CD8-positive, alpha-beta T cell (primary cell): ENCODE measurements at regions of chr6 and their contacts with region 1.

Region 1: GRCh38 chr6:79646006-79646405 is 14.9 kb downstream of the SH3BGRL2 start:
- DNase-seq: peak in 6 of 9 experiments; percentile 12 to 73 (median 47)
- ATAC-seq: peak; percentile 42
- H3K4me3 ChIP-seq: no peak overlapping the region
- H3K4me3 Mint-ChIP-seq: no peak overlapping the region
- H3K27ac ChIP-seq: no peak overlapping the region
- H3K27ac Mint-ChIP-seq: no peak overlapping the region
- H3K4me1 ChIP-seq: peaks cover 14% of the 10 kb centered on the region
- H3K4me1 Mint-ChIP-seq: peaks cover 10% of the 10 kb centered on the region
- H3K27me3 ChIP-seq: no peaks in the 10 kb centered on the region
- H3K27me3 Mint-ChIP-seq: peaks cover 9% of the 10 kb centered on the region
- CTCF ChIP-seq: peak; percentile 27

Region 2: GRCh38 chr6:79600812-79601609 is 45.0 kb before region 1 on chr6:
- CTCF ChIA-PET with region 1: no interaction called
- POLR2A ChIA-PET with region 1: no interaction called
- intact Hi-C with region 1: no loop called
- DNase-seq: no peak
- ATAC-seq: no peak
- H3K4me3 ChIP-seq: no peak overlapping the region
- H3K4me3 Mint-ChIP-seq: no peak overlapping the region
- H3K27ac ChIP-seq: no peak overlapping the region
- H3K27ac Mint-ChIP-seq: no peak overlapping the region
- H3K4me1 ChIP-seq: no peaks in the 10 kb centered on the region
- H3K4me1 Mint-ChIP-seq: no peaks in the 10 kb centered on the region
- H3K27me3 ChIP-seq: no peaks in the 10 kb centered on the region
- H3K27me3 Mint-ChIP-seq: peaks cover 3% of the 10 kb centered on the region
- CTCF ChIP-seq: no peak

Region 3: GRCh38 chr6:79672631-79673111 is 26.7 kb after region 1 on chr6:
- CTCF ChIA-PET with region 1: interaction called, 11 read pairs
- POLR2A ChIA-PET with region 1: interaction called, 3 read pairs
- intact Hi-C with region 1: loop called in 1 of 2 experiments (anchors 1 kb)
- DNase-seq: peak in 2 of 9 experiments; percentile 25 to 52
- ATAC-seq: no peak
- H3K4me3 ChIP-seq: no peak overlapping the region
- H3K4me3 Mint-ChIP-seq: no peak overlapping the region
- H3K27ac ChIP-seq: no peak overlapping the region
- H3K27ac Mint-ChIP-seq: peak overlapping the region; percentile 15
- H3K4me1 ChIP-seq: peaks cover 48% of the 10 kb centered on the region
- H3K4me1 Mint-ChIP-seq: peaks cover 29% of the 10 kb centered on the region
- H3K27me3 ChIP-seq: no peaks in the 10 kb centered on the region
- H3K27me3 Mint-ChIP-seq: no peaks in the 10 kb centered on the region
- CTCF ChIP-seq: no peak

Region 4: DNA sequence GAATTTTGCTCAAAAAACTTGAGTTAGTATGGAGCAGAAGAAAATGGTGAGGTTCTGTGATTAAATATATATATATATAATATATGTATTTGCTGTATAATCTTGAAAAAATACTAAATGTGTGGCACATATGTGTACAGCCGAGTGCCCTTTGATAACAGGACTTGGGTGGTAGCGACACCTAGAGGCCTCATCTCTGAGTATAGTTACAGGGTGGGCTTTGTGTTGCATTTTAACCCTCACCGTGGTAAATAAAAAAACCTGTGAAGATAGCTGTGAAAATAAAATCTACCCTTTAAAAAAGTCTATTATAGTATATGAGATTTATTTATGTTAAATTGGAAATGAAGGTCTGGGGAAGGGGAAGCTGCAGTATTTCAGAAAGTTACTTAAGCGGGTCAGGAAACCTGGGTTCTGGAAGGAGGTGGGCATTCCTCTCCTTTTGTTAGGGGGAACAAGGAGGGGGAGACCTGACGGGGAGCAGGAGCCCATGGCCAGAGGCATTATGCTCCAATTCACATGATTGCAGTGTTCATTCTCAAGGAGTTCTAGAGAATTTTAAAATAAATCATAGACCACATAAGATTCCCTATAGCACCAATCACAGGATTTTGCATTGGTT is 67.8 kb after region 1 on chr6:
- CTCF ChIA-PET with region 1: interaction called, 20 read pairs
- POLR2A ChIA-PET with region 1: no interaction called
- intact Hi-C with region 1: loop called (anchors 1 to 5 kb)
- DNase-seq: peak; percentile 7 to 73 (median 53)
- ATAC-seq: peak; percentile 40
- H3K4me3 ChIP-seq: no peak overlapping the region
- H3K4me3 Mint-ChIP-seq: no peak overlapping the region
- H3K27ac ChIP-seq: no peak overlapping the region
- H3K27ac Mint-ChIP-seq: no peak overlapping the region
- H3K4me1 ChIP-seq: peaks cover 11% of the 10 kb centered on the region
- H3K4me1 Mint-ChIP-seq: no peaks in the 10 kb centered on the region
- H3K27me3 ChIP-seq: no peaks in the 10 kb centered on the region
- H3K27me3 Mint-ChIP-seq: peaks cover 6% of the 10 kb centered on the region
- CTCF ChIP-seq: peak; percentile 70